Endothelial cell of umbilical vein (primary cell): ENCODE measurements at regions of chr20 and their contacts with region 1.

Region 1: DNA sequence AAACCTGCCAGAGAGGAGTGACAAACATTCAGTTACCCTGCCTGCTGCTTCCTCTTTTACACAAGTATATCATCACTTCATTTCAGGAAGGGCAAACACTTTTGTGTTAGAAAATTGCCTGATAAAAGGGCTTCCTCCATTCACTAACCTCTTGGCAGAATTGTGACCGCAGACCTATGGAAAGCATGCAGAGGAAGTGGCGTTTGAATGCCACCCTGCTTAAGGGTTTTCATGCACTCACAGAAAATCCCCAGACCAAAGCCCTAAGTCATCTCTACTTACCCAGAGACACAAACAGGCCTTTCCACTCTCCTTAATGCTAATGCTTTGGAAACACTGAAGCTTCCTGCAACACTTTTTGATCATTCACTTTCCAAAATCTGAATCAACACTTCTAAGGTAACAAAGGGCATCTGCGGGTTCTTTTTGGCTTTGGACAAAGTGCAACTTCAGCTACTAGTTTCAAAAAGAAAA is 22.1 kb upstream of the RALGAPA2 start:
- DNase-seq: peak; percentile 92
- H3K4me3 ChIP-seq: no peak overlapping the region
- H3K27ac ChIP-seq: peak overlapping the region; percentile 99
- H3K4me1 ChIP-seq: peaks cover 50% of the 10 kb centered on the region
- H3K27me3 ChIP-seq: no peaks in the 10 kb centered on the region
- CTCF ChIP-seq: no peak
- POLR2A ChIP-seq: peak; percentile 60

Region 2: GRCh38 chr20:19815553-19815991 is 918.9 kb before region 1 on chr20:
- CTCF ChIA-PET with region 1: no interaction called
- POLR2A ChIA-PET with region 1: no interaction called
- dilution Hi-C with region 1: no loop called
- intact Hi-C with region 1: loop called (anchors 10 kb)
- DNase-seq: peak; percentile 98
- H3K4me3 ChIP-seq: no peak overlapping the region
- H3K27ac ChIP-seq: peak overlapping the region; percentile 96
- H3K4me1 ChIP-seq: peaks cover 59% of the 10 kb centered on the region
- H3K27me3 ChIP-seq: no peaks in the 10 kb centered on the region
- CTCF ChIP-seq: no peak
- POLR2A ChIP-seq: peak; percentile 20

Region 3: DNA sequence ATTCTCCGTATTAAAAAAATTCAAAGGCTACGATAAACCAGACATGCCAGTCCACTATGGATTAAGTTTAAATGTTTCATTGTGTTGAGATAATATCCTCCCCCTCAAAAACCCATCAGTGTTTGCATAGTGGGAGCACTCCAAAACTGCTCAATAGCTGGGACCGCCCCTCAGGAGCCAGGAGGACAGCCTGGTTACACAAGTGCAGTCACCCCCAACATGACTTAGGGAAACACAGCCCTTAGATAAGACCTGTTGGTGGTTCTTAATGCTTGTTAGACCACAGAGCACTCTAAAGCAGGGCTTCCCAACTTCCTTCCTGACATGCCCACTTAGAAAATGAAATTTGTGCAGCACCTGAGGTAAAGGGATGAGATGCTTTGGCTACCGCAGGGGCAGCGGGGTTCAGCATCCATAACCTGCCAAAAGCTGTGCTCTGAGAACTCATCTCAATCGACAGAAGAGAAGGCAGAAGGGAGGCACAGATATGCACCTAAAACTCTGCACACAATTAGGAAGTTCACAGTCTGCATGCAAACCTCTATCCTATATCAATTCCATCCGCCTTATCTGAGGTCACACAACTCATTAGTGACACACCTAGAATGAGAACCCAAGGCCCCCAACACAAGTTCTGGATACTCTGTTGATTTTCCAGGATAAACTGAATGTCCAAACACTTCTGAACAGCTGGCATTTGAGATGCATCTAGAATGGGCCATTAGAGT is 96.3 kb before region 1 on chr20:
- CTCF ChIA-PET with region 1: no interaction called
- POLR2A ChIA-PET with region 1: no interaction called
- dilution Hi-C with region 1: no loop called
- intact Hi-C with region 1: no loop called
- DNase-seq: no peak
- H3K4me3 ChIP-seq: no peak overlapping the region
- H3K27ac ChIP-seq: no peak overlapping the region
- H3K4me1 ChIP-seq: no peaks in the 10 kb centered on the region
- H3K27me3 ChIP-seq: no peaks in the 10 kb centered on the region
- CTCF ChIP-seq: no peak
- POLR2A ChIP-seq: no peak

Region 4: DNA sequence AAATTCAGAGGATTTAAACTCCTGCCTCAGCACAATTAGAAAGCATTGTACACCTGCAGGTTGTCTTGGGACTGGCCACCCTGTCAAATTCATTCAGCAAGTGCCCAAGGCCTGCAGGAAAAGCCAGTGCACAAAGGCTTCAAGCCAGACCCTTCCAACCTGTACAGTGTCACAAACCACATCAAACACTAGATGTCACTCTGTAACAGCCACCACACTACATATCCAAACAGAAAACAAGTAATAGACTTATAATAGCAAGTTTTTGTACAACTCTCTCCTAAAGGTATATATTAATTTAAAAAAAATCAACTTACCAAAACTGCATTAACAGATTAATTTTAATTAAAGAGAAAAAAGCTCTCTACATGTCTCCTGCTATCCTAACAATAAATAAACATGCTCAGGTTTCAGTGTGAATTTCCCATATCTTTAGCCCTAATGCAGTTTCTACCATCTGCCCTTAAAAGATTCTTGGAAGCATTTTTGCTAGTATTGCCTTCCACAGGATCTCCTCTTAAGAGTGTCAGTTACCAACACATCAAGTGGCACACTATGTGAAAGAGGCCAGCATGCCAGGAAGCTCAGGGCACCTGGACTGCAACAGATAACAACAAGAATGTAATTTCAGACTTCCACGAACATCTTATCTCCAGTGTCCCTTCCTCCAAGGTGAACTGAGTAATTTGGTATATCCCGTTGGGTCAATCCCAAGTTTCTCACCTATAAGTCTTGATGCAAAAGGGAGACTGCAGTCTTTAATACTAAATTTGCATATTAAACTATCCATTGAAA is 69.5 kb before region 1 on chr20:
- CTCF ChIA-PET with region 1: no interaction called
- POLR2A ChIA-PET with region 1: no interaction called
- dilution Hi-C with region 1: no loop called
- intact Hi-C with region 1: loop called (anchors 1 kb)
- DNase-seq: peak; percentile 77
- H3K4me3 ChIP-seq: no peak overlapping the region
- H3K27ac ChIP-seq: no peak overlapping the region
- H3K4me1 ChIP-seq: peaks cover 26% of the 10 kb centered on the region
- H3K27me3 ChIP-seq: no peaks in the 10 kb centered on the region
- CTCF ChIP-seq: peak; percentile 52 to 60
- POLR2A ChIP-seq: peak; percentile 27

Region 5: GRCh38 chr20:20712474-20713243 is 21.9 kb before region 1 on chr20 and contains the start of gene RALGAPA2:
- CTCF ChIA-PET with region 1: interaction called, 6 read pairs
- POLR2A ChIA-PET with region 1: no interaction called
- dilution Hi-C with region 1: no loop called
- intact Hi-C with region 1: loop called (anchors 1 kb)
- DNase-seq: peak; percentile 99
- H3K4me3 ChIP-seq: peak within 1 kb of the TSS; percentile 72 to 99 (median 77)
- H3K27ac ChIP-seq: peak within 1 kb of the TSS; percentile 77
- H3K4me1 ChIP-seq: peaks cover 21% of the 10 kb centered on the region
- H3K27me3 ChIP-seq: no peaks in the 10 kb centered on the region
- CTCF ChIP-seq: no peak
- POLR2A ChIP-seq: peak; percentile 36
- total RNA-seq, gene RALGAPA2: 39.7 and 46.8 TPM in 2 replicates

Region 6: GRCh38 chr20:20752712-20753111 is 18.2 kb after region 1 on chr20:
- CTCF ChIA-PET with region 1: interaction called, 3 read pairs
- POLR2A ChIA-PET with region 1: interaction called, 3 read pairs
- dilution Hi-C with region 1: no loop called
- intact Hi-C with region 1: loop called (anchors 1 kb)
- DNase-seq: peak; percentile 89
- H3K4me3 ChIP-seq: no peak overlapping the region
- H3K27ac ChIP-seq: peak overlapping the region; percentile 62
- H3K4me1 ChIP-seq: peaks cover 18% of the 10 kb centered on the region
- H3K27me3 ChIP-seq: no peaks in the 10 kb centered on the region
- CTCF ChIP-seq: no peak
- POLR2A ChIP-seq: no peak

Region 7: DNA sequence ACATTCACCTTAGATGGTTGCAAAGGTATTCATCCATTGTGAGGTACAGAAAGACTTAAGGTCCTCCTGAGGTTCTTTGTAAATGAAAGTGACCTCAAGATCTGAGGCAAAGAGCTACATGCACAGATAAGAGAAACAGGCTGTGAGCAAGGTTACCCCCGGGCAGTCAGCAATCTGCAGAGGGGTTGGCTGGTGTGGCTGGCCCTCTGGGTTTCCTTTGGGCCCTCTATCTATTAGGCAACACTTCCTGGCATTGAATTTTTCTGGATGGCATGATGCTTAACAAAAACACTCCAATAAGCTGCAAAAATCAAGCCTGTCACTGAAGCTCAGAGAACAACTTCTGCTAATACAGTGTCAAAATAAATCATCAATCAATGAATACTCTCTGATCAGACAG is 26.8 kb after region 1 on chr20:
- CTCF ChIA-PET with region 1: interaction called, 6 read pairs
- POLR2A ChIA-PET with region 1: no interaction called
- dilution Hi-C with region 1: no loop called
- intact Hi-C with region 1: loop called (anchors 1 kb)
- DNase-seq: peak; percentile 87
- H3K4me3 ChIP-seq: no peak overlapping the region
- H3K27ac ChIP-seq: peak overlapping the region; percentile 54
- H3K4me1 ChIP-seq: peaks cover 53% of the 10 kb centered on the region
- H3K27me3 ChIP-seq: no peaks in the 10 kb centered on the region
- CTCF ChIP-seq: no peak
- POLR2A ChIP-seq: peak; percentile 56

Region 8: GRCh38 chr20:20802328-20802727 is 67.8 kb after region 1 on chr20:
- CTCF ChIA-PET with region 1: no interaction called
- POLR2A ChIA-PET with region 1: no interaction called
- dilution Hi-C with region 1: no loop called
- intact Hi-C with region 1: loop called (anchors 1 kb)
- DNase-seq: peak; percentile 86
- H3K4me3 ChIP-seq: no peak overlapping the region
- H3K27ac ChIP-seq: peak overlapping the region; percentile 27
- H3K4me1 ChIP-seq: peaks cover 16% of the 10 kb centered on the region
- H3K27me3 ChIP-seq: peaks cover 0 to 6% of the 10 kb centered on the region in 2 experiments
- CTCF ChIP-seq: no peak
- POLR2A ChIP-seq: no peak